ENCODE measurements at regions of chr6 and their contacts with region 1.

Region 1: GRCh38 chr6:29955783-29956182 is 13.5 kb downstream of the HLA-A start:
- DNase-seq: no peak
- ATAC-seq: no peak
- H3K4me3 ChIP-seq: no peak overlapping the region
- H3K4me3 Mint-ChIP-seq: no peak overlapping the region
- H3K27ac ChIP-seq: no peak overlapping the region
- H3K27ac Mint-ChIP-seq: no peak overlapping the region
- H3K4me1 ChIP-seq: no peaks in the 10 kb centered on the region
- H3K4me1 Mint-ChIP-seq: peaks cover 14% of the 10 kb centered on the region
- H3K27me3 ChIP-seq: no peaks in the 10 kb centered on the region
- H3K27me3 Mint-ChIP-seq: no peaks in the 10 kb centered on the region
- CTCF ChIP-seq: no peak

Region 2: DNA sequence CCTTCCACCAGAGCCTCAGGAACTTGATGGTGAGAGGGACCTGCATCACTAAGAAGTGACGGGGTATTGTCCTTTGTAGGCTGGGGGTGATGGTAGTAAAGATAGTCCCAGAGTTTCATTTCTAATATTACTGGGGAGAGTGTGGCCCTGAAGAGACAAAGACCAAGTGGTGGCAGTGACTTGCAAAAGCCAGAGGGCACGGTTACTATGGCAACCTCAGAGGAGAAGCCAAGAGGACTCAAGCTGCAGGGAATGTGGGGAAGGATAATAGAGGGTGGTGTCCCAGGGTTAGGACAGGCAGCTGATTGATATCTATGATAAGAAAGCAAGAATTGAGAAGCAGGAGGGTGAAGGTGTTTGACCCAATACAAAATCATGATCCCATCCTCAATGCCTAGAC is 85.7 kb before region 1 on chr6:
- CTCF ChIA-PET with region 1: no interaction called
- POLR2A ChIA-PET with region 1: no interaction called
- intact Hi-C with region 1: no loop called
- DNase-seq: no peak
- ATAC-seq: no peak
- H3K4me3 ChIP-seq: no peak overlapping the region
- H3K4me3 Mint-ChIP-seq: no peak overlapping the region
- H3K27ac ChIP-seq: no peak overlapping the region
- H3K27ac Mint-ChIP-seq: no peak overlapping the region
- H3K4me1 ChIP-seq: no peaks in the 10 kb centered on the region
- H3K4me1 Mint-ChIP-seq: no peaks in the 10 kb centered on the region
- H3K27me3 ChIP-seq: no peaks in the 10 kb centered on the region
- H3K27me3 Mint-ChIP-seq: peaks cover 28% of the 10 kb centered on the region
- CTCF ChIP-seq: no peak

Region 3: DNA sequence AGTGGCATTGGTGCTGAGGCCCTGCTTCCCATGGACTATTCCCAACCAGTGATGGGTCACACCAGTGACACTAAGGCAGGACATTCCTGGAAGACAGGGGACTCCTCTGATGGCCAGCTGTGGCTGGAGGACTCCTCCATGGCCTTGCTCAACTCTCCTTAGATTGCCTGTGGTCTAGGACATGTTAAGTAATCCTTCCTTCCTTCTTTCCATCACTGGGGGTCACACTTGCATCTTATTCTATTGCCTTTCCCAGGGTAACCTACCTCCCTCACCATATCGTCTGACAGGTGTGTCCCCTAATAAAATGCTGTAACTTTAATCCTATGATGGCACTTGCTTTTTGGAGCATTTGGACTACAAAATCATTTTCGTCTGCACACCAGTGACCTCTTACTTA is 37.9 kb before region 1 on chr6:
- CTCF ChIA-PET with region 1: no interaction called
- POLR2A ChIA-PET with region 1: no interaction called
- intact Hi-C with region 1: loop called in 1 of 2 experiments (anchors 5 kb)
- DNase-seq: peak in 2 of 9 experiments; percentile 24 to 29
- ATAC-seq: no peak
- H3K4me3 ChIP-seq: no peak overlapping the region
- H3K4me3 Mint-ChIP-seq: no peak overlapping the region
- H3K27ac ChIP-seq: no peak overlapping the region
- H3K27ac Mint-ChIP-seq: no peak overlapping the region
- H3K4me1 ChIP-seq: no peaks in the 10 kb centered on the region
- H3K4me1 Mint-ChIP-seq: no peaks in the 10 kb centered on the region
- H3K27me3 ChIP-seq: no peaks in the 10 kb centered on the region
- H3K27me3 Mint-ChIP-seq: peaks cover 6% of the 10 kb centered on the region
- CTCF ChIP-seq: no peak

Region 4: DNA sequence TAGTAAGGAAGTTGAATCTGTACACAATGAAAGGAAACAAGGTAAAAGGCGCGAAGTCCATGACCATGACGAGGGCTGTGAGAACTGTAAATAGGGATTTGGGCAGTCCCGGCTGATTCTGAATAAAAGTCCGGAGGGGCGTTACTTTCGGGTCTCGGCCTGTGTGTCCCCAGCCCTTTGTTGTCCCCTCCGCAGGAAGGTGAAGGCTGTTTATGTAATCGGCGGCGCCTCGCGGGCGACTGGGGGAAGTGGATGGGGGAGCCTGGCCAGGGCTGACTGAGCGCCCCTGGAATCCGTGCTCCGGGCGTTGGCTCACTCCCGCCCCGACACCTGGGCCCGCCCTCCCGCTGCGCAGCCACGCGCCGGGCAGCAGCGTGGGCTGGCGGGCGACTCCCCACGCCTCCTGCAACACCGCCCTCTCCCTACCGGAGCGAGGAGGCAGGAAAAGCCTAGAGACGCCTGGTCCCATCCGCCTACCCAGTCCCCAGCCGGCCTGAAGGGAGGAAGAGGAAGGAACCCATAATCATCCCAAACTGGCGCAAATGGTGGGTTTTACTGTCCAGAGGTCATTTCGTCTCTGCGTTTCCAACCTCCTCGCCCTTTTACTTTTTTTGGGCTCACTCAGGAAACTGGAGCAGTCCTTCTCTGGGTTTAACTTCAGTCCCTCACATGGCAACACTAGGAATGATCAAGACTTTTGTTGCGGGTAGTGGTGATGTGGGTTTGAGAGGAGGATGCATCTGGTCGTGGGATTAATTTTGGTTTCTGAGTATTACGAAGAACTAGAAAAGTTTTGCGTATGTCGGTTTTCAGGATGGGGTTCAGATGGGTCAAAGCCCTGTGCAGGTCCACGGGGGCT is 145.0 kb after region 1 on chr6:
- CTCF ChIA-PET with region 1: no interaction called
- POLR2A ChIA-PET with region 1: no interaction called
- intact Hi-C with region 1: no loop called
- DNase-seq: peak in 5 of 9 experiments; percentile 7 to 52 (median 36)
- ATAC-seq: no peak
- H3K4me3 ChIP-seq: peak overlapping the region; percentile 41 to 49
- H3K4me3 Mint-ChIP-seq: peak overlapping the region; percentile 65
- H3K27ac ChIP-seq: no peak overlapping the region
- H3K27ac Mint-ChIP-seq: no peak overlapping the region
- H3K4me1 ChIP-seq: peaks cover 41% of the 10 kb centered on the region
- H3K4me1 Mint-ChIP-seq: peaks cover 49% of the 10 kb centered on the region
- H3K27me3 ChIP-seq: peaks cover 0 to 22% of the 10 kb centered on the region in 2 experiments
- H3K27me3 Mint-ChIP-seq: peaks cover 37% of the 10 kb centered on the region
- CTCF ChIP-seq: no peak